Left cardiac atrium (tissue), 4 donors: ENCODE measurements at regions of chr12 and their contacts with region 1.

Region 1: DNA sequence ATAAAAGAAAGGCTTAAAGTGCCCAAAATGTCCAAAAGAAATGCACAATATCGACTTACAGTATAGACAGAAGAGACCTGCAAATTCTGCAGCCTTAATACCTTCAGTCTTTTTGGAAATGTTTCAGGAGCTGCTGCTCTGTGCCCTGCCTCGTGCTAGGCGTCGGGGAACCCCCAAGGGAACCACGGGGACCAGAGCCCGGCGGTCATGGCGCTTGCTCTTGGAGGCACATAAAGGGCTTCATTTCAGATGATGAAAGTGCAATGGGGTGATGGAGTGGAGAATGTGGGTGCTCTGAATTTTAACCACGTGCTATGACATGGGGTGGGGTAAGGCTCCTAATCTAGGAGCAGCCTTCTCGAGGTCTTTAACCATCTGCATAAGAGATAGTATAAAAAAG is 14.8 kb upstream of the AACS start:
- DNase-seq: no peak
- ATAC-seq: peak in 1 of 2 donors; percentile 21

Region 2: GRCh38 chr12:124964836-124965462 is 85.5 kb before region 1 on chr12:
- intact Hi-C with region 1: no loop called
- DNase-seq: no peak
- ATAC-seq: no peak

Region 3: DNA sequence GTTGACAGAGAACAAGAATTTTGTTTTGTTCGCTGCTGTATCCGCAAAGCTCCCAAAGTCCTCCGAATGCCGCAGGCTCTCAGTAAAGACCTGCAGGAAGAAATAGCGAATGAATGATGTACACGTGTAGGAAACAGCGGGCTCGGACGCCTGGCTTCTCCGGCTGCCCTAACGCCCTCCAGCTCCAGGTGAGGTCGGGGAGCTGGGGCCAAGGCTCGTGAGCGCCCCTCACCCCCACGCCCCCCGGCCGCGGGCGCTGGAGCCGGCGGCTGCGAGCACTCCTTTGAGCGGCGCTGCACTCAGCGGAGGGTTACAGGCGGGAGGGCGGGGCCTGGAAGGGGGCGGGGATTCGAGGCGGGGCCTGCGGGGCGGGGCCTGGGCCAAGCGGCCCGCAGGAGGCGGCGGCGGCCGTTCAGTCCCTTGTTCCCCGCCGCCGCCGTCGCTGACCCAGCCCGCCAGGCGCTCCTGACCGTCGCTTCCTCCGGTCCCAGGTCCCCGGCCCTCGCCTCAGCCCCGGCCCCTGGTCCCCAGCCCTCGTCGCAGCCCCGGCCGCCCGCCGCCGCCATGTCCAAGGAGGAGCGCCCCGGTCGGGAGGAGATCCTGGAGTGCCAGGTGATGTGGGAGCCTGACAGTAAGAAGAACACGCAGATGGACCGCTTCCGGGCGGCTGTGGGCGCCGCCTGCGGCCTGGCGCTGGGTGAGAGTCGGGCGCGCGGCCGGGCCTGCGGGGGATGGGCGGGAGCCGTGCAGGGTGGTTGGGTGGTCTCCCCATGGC is 14.8 kb after region 1 on chr12 and contains the start of gene AACS:
- intact Hi-C with region 1: loop called in 1 of 2 experiments (anchors 2 kb)
- DNase-seq: peak; percentile 81
- ATAC-seq: peak; percentile 97 to 98
- total RNA-seq, gene AACS: 17.5 to 23.6 TPM

Region 4: DNA sequence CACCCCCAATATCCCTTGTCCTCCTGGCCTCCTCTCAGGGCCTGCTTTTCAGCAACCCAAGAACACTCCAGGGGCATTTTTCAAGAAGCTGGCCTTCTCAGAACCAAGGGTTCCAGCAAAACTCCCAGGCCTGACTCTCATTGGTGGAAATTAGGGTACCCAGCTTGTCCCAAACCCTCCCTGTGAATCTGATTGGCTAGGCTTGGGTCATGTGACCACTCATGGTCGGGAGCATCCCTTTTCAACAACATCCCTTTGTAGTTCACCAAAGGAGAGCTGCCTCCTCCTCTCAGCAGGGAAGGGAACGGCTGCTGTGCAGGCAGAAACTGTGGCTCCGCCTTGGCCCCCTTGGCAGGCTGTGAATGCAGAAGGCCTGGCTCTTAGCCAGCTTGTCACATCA is 109.2 kb after region 1 on chr12:
- intact Hi-C with region 1: no loop called
- DNase-seq: no peak
- ATAC-seq: no peak

Region 5: DNA sequence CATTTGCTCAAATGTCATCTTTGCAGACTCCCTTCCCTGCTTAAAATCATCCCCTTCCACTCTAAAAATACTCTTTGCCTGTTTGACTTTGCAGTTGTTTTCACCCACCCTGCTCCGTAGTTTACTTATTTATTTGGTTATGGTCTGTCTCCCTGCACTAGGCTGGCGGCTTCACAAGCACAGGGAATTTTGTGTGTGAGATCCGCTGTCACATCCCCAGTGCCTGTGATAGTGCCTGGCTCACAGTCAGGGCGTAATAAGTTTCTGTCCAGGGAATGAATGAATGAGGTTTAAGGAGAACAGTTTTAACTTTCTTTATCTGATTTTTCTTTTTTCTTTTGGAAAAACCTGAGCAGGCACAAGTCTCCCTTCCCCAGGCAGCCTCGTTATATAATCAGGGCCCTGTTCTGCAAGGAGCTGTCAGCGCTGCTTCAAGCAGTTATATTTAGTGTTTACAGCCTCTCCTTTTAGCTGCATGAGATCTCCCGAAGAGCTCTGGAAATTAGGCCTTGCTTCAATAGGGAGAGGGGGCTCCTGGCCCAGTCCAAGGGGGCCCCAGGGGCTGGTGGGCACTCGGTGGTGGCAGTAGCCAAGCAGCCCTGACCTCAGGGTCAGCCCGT is 121.9 kb after region 1 on chr12:
- intact Hi-C with region 1: no loop called
- DNase-seq: no peak
- ATAC-seq: no peak